ENCODE measurements at regions of chr15 and their contacts with region 1.

Region 1: DNA sequence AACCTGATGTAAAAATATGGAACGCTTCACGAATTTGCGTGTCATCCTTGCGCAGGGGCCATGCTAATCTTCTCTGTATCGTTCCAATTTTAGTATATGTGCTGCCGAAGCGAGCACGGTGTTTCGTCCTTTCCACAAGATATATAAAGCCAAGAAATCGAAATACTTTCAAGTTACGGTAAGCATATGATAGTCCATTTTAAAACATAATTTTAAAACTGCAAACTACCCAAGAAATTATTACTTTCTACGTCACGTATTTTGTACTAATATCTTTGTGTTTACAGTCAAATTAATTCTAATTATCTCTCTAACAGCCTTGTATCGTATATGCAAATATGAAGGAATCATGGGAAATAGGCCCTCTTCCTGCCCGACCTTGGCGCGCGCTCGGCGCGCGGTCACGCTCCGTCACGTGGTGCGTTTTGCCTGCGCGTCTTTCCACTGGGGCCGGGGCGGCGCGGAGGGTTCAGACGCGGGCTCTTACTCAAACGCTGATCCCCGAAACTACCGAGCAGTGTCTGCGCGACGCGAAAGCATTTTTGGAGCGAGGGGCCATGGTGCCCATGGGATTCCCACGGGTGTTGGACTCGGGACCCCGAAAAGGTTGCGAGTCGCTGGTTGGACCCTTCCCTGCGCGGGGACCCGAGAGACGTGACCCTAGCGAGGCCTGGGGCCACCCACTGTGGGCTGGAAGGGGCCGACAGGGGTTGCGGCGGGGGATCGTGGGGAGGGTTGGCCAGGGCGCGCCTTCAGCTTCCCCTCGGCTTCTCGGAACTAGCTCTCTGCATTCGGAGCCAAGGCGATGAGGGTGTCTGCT is at the start of gene RNU6-1:
- DNase-seq: peak; percentile 93 to 97 (median 96)
- ATAC-seq: peak; percentile 86 to 93 (median 89)
- H3K4me3 ChIP-seq: peak within 1 kb of the TSS; percentile 87 to 91
- H3K4me3 Mint-ChIP-seq: peak within 1 kb of the TSS; percentile 87 to 93 (median 92)
- H3K27ac ChIP-seq: peak within 1 kb of the TSS; percentile 94
- H3K27ac Mint-ChIP-seq: peak within 1 kb of the TSS; percentile 98 to 99
- H3K4me1 ChIP-seq: peaks cover 18 to 38% of the 10 kb centered on the region in 2 experiments
- H3K4me1 Mint-ChIP-seq: peaks cover 28 to 42% (median 37%) of the 10 kb centered on the region in 3 donors
- H3K27me3 ChIP-seq: peaks cover 4 to 12% of the 10 kb centered on the region in 2 experiments
- H3K27me3 Mint-ChIP-seq: peaks cover under 1 to 18% of the 10 kb centered on the region in 2 donors
- total RNA-seq, gene RNU6-1: not detected

Region 2: DNA sequence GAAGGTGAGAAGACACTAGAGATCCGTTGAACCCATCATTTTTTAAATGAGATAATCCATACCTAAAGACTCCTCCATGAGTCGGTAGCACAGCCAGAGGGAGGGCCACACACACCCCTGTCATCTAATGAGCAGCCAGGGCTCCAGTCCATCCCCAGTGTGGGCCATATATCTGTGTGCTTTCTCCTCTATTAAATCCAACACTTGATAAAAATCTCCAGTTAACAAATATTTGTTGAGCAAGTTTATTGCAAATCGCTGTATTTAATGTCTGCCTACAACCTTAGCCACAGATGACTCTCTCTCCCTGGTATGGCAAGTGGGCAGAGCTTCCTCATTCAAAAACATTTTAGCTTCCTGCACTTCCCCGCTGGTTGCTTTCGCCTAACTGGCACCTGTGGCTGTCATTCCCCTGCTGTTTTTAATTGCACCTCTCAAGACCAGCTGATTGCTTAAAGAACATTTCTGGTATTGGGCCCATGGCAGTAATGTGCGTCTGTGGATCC is 691.9 kb before region 1 on chr15:
- CTCF ChIA-PET with region 1: interaction called in 1 of 2 experiments, 10 read pairs
- POLR2A ChIA-PET with region 1: no interaction called
- DNase-seq: peak in 5 of 35 experiments; percentile 9 to 32 (median 23)
- ATAC-seq: peak in 3 of 4 experiments; percentile 42 to 53 (median 46)
- H3K4me3 ChIP-seq: no peak overlapping the region
- H3K4me3 Mint-ChIP-seq: peak overlapping the region; percentile 18 to 59 (median 37)
- H3K27ac ChIP-seq: peak overlapping the region; percentile 38
- H3K27ac Mint-ChIP-seq: peak overlapping the region; percentile 82 to 85
- H3K4me1 ChIP-seq: peaks cover 52 to 69% of the 10 kb centered on the region in 2 experiments
- H3K4me1 Mint-ChIP-seq: peaks cover 73 to 88% (median 83%) of the 10 kb centered on the region in 3 donors
- H3K27me3 ChIP-seq: no peaks in the 10 kb centered on the region
- H3K27me3 Mint-ChIP-seq: no peaks in the 10 kb centered on the region

Region 3: GRCh38 chr15:67456677-67457529 is 383.2 kb before region 1 on chr15:
- CTCF ChIA-PET with region 1: interaction called, 9 to 19 read pairs
- POLR2A ChIA-PET with region 1: no interaction called
- DNase-seq: peak; percentile 33 to 84 (median 76)
- ATAC-seq: peak; percentile 84 to 92 (median 90)
- H3K4me3 ChIP-seq: no peak overlapping the region
- H3K4me3 Mint-ChIP-seq: no peak overlapping the region
- H3K27ac ChIP-seq: no peak overlapping the region
- H3K27ac Mint-ChIP-seq: no peak overlapping the region
- H3K4me1 ChIP-seq: peaks cover 0 to 3% of the 10 kb centered on the region in 2 experiments
- H3K4me1 Mint-ChIP-seq: peaks cover 3 to 5% (median 3%) of the 10 kb centered on the region in 3 donors
- H3K27me3 ChIP-seq: peaks cover 0 to 8% of the 10 kb centered on the region in 2 experiments
- H3K27me3 Mint-ChIP-seq: peaks cover 4% of the 10 kb centered on the region in 2 donors

Region 4: GRCh38 chr15:67906382-67906781 is 66.2 kb after region 1 on chr15:
- CTCF ChIA-PET with region 1: no interaction called
- POLR2A ChIA-PET with region 1: no interaction called
- DNase-seq: no peak
- ATAC-seq: no peak
- H3K4me3 ChIP-seq: no peak overlapping the region
- H3K4me3 Mint-ChIP-seq: no peak overlapping the region
- H3K27ac ChIP-seq: no peak overlapping the region
- H3K27ac Mint-ChIP-seq: no peak overlapping the region
- H3K4me1 ChIP-seq: no peaks in the 10 kb centered on the region
- H3K4me1 Mint-ChIP-seq: no peaks in the 10 kb centered on the region
- H3K27me3 ChIP-seq: no peaks in the 10 kb centered on the region
- H3K27me3 Mint-ChIP-seq: peaks cover 6 to 7% of the 10 kb centered on the region in 2 donors

Region 5: DNA sequence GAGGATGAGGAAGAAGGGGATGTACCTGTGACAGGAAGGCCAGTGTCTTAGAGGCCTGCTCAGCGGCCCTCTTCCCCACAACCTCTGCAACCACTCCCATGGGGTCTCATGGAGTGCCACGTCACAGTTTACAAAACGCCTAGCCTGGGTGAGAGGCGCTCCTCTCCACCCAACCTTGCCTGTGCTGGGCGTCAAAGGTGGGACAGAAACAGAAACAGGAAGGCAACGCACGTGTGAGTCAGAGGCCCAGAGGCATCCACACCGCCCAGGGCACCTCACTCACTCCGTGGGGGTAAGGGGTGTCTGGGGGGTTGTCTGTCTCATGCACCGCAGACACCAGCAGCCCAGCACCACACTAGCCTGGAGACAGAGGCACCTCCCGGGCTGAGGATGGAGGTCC is 369.6 kb after region 1 on chr15:
- CTCF ChIA-PET with region 1: no interaction called
- POLR2A ChIA-PET with region 1: no interaction called
- DNase-seq: peak in 7 of 35 experiments; percentile 15 to 40 (median 21)
- ATAC-seq: peak; percentile 59 to 65 (median 62)
- H3K4me3 ChIP-seq: no peak overlapping the region
- H3K4me3 Mint-ChIP-seq: peak overlapping the region in 1 of 3 donors; percentile 34
- H3K27ac ChIP-seq: no peak overlapping the region
- H3K27ac Mint-ChIP-seq: peak overlapping the region; percentile 20 to 79
- H3K4me1 ChIP-seq: peaks cover 32 to 57% of the 10 kb centered on the region in 2 experiments
- H3K4me1 Mint-ChIP-seq: peaks cover 20 to 42% (median 28%) of the 10 kb centered on the region in 3 donors
- H3K27me3 ChIP-seq: no peaks in the 10 kb centered on the region
- H3K27me3 Mint-ChIP-seq: no peaks in the 10 kb centered on the region